ENCODE measurements at regions of chr7 and their contacts with region 1.

Region 1: GRCh38 chr7:50092579-50093491 is at the start of gene ZPBP:
- DNase-seq: peak; percentile 30
- ATAC-seq: peak; percentile 77
- H3K4me3 ChIP-seq: peak within 1 kb of the TSS; percentile 38; the same call in 1 of the 2 replicates
- H3K27ac ChIP-seq: no peak within 1 kb of the TSS
- H3K4me1 ChIP-seq: no peaks in the 10 kb centered on the region
- H3K27me3 ChIP-seq: no peaks in the 10 kb centered on the region
- CTCF ChIP-seq: peak; percentile 54 to 72 (median 68); a peak in 5 of 6 replicates
- EP300 ChIP-seq: no peak
- POLR2A ChIP-seq: peak; percentile 58
- RAD21 ChIP-seq: peak; percentile 95
- polyA plus RNA-seq, gene ZPBP: not detected

Region 2: DNA sequence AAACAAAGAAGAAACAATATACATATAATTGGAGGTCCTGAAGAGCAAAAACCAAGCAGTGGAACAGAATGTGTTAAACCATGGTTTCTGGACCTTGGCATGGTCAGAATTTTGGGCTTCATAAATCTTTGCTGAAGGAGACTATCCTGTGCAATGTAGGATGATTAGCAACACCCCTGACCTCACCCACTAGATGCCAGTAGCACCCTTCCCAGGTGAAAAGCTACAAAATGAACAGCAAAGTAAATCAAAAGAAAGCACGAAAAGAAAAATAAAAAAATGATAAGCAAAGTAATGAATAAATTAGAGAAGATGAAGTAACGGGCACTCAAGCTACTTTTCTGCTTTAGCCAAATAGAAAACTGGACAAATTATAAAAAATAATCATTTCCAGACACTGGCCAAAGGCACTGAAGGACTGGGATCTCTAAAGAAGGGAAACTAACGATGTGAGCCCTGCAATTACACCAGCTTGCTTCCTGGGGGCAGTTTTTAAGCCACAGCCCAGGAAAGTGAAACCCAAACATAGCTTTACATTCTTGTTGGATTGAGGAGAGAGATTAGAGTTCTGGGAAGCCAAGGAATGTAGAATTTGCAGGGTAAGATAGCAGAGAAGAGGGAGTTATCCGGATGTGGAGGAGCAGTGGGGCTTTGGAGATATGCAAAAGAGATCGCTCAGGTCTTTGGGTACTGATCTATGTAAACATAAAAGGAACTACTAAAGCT is 19.6 kb after region 1 on chr7:
- CTCF ChIA-PET with region 1: interaction called, 17 read pairs
- POLR2A ChIA-PET with region 1: no interaction called
- RAD21 ChIA-PET with region 1: interaction called, 9 read pairs
- SMC1A ChIA-PET with region 1: interaction called, 36 read pairs
- in situ Hi-C with region 1: no loop called
- intact Hi-C with region 1: no loop called
- DNase-seq: no peak
- ATAC-seq: no peak; the same call in 2 of the 3 replicates
- H3K4me3 ChIP-seq: no peak overlapping the region
- H3K27ac ChIP-seq: no peak overlapping the region
- H3K4me1 ChIP-seq: no peaks in the 10 kb centered on the region
- H3K27me3 ChIP-seq: no peaks in the 10 kb centered on the region
- CTCF ChIP-seq: 0 out of 6 replicates have a peak, but pooled peaks of 1 of the 3 experiments have one; percentile 4
- EP300 ChIP-seq: no peak
- POLR2A ChIP-seq: no peak
- RAD21 ChIP-seq: 0 out of 2 replicates have a peak, but pooled peaks have one; percentile 6

Region 3: DNA sequence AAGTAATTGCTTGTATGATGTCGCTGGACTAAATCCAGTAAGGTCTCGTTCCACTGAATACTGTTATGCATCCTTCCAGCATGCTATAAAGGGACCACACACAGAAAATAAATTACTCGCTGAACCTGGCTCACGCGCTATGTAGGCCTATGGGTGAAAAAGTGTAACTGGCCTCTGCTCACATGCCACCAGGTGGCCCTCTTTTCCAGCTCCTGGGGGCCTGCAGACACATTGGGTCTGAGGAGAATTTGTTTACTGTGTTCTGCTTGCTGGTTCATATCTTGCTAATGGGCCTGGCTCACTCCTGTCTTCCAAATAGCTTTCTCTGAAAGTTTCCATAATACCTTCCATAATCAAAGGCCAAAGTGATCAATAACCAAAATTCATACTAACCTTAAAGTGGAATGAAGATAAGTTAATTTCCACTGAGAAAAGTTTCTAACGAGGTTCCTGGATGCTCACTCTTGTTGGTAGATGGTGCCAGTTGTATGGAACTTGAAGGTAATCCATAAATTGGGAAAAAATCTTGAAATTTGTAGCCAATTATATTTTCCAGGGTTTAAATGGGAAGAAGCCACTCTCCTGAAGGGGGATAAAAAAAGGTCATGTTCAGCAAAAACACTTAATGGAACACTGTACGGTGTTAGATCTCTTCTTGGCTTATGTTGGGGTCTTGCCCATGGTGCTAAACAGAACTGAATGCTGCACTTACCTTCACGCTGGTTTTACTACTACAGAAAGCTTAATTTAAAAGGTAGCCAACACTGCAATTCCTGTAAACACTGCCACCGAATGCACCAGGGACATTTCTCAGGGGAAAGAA is 27.2 kb after region 1 on chr7:
- CTCF ChIA-PET with region 1: interaction called, 36 read pairs
- POLR2A ChIA-PET with region 1: no interaction called
- RAD21 ChIA-PET with region 1: interaction called, 9 read pairs
- SMC1A ChIA-PET with region 1: interaction called, 36 read pairs
- in situ Hi-C with region 1: no loop called
- intact Hi-C with region 1: no loop called
- DNase-seq: no peak
- ATAC-seq: peak; percentile 98
- H3K4me3 ChIP-seq: no peak overlapping the region
- H3K27ac ChIP-seq: no peak overlapping the region
- H3K4me1 ChIP-seq: peaks cover 4% of the 10 kb centered on the region; the same call in 1 of the 2 replicates
- H3K27me3 ChIP-seq: no peaks in the 10 kb centered on the region
- CTCF ChIP-seq: peak; percentile 68 to 70 (median 69)
- EP300 ChIP-seq: no peak
- POLR2A ChIP-seq: no peak
- RAD21 ChIP-seq: peak; percentile 77

Region 4: GRCh38 chr7:50632561-50633413 is 540.0 kb after region 1 on chr7:
- CTCF ChIA-PET with region 1: interaction called, 6 read pairs
- POLR2A ChIA-PET with region 1: no interaction called
- RAD21 ChIA-PET with region 1: interaction called, 5 read pairs
- SMC1A ChIA-PET with region 1: interaction called, 5 read pairs
- in situ Hi-C with region 1: no loop called
- intact Hi-C with region 1: loop called (anchors 5 kb)
- DNase-seq: no peak
- ATAC-seq: peak; percentile 91
- H3K4me3 ChIP-seq: no peak overlapping the region
- H3K27ac ChIP-seq: no peak overlapping the region
- H3K4me1 ChIP-seq: no peaks in the 10 kb centered on the region
- H3K27me3 ChIP-seq: peaks cover 0 to 1% of the 10 kb centered on the region in 2 experiments; a peak in 3 of 4 replicates
- CTCF ChIP-seq: peak; percentile 73 to 95 (median 88)
- EP300 ChIP-seq: no peak
- POLR2A ChIP-seq: no peak
- RAD21 ChIP-seq: peak; percentile 65

Region 5: GRCh38 chr7:50679218-50680007 is 586.6 kb after region 1 on chr7:
- CTCF ChIA-PET with region 1: interaction called, 6 read pairs
- POLR2A ChIA-PET with region 1: no interaction called
- RAD21 ChIA-PET with region 1: interaction called, 8 read pairs
- SMC1A ChIA-PET with region 1: interaction called, 4 read pairs
- in situ Hi-C with region 1: loop called (anchors 10 kb)
- intact Hi-C with region 1: loop called (anchors 1 kb)
- DNase-seq: no peak
- ATAC-seq: peak; percentile 80
- H3K4me3 ChIP-seq: no peak overlapping the region
- H3K27ac ChIP-seq: no peak overlapping the region
- H3K4me1 ChIP-seq: no peaks in the 10 kb centered on the region
- H3K27me3 ChIP-seq: peaks cover 4 to 10% of the 10 kb centered on the region in 2 experiments; a peak in 3 of 4 replicates
- CTCF ChIP-seq: peak; percentile 29 to 55 (median 40); a peak in 4 of 6 replicates
- EP300 ChIP-seq: no peak
- POLR2A ChIP-seq: no peak
- RAD21 ChIP-seq: peak; percentile 71

Region 6: GRCh38 chr7:51067757-51068156 is 974.9 kb after region 1 on chr7:
- CTCF ChIA-PET with region 1: interaction called, 4 read pairs
- POLR2A ChIA-PET with region 1: no interaction called
- RAD21 ChIA-PET with region 1: interaction called, 4 read pairs
- SMC1A ChIA-PET with region 1: no interaction called
- in situ Hi-C with region 1: no loop called
- intact Hi-C with region 1: loop called (anchors 1 kb)
- DNase-seq: no peak
- ATAC-seq: peak; percentile 65; the same call in 2 of the 3 replicates
- H3K4me3 ChIP-seq: no peak overlapping the region
- H3K27ac ChIP-seq: no peak overlapping the region
- H3K4me1 ChIP-seq: no peaks in the 10 kb centered on the region
- H3K27me3 ChIP-seq: no peaks in the 10 kb centered on the region
- CTCF ChIP-seq: peak; percentile 43 to 55 (median 53); a peak in 5 of 6 replicates
- EP300 ChIP-seq: no peak
- POLR2A ChIP-seq: no peak
- RAD21 ChIP-seq: peak; percentile 46

Region 7: DNA sequence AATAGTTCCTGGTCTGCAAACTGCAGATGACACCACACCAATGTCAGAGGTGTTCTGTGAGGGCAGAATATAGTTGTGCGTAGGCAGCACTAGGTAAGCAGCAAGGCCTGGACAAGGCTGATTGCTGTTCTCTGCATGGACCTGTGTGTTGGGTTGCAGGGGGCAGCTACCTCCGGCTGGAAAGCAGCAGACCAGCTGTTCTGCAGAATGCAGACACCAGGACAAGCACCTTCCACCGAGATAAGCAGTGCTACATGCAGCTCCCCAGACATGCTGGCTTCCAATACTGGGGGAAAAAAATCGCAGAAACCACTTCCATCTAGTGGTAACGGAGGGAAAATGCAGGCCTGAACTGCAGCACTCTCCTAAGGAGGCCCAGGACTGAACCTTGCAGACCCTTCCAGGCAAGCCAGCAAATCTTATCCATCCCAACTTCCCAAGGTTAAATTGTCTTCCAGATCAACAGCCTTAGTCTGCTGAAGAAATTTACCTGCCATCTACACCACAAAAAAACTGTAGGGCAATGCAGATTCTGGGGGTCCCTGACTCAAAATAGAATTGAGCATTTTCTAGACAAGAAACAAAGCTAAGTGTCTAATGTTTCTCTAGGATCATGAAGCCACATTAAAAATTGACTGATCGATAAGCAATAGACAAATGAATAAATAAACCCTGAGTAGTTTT is 1274.2 kb after region 1 on chr7:
- CTCF ChIA-PET with region 1: no interaction called
- POLR2A ChIA-PET with region 1: no interaction called
- RAD21 ChIA-PET with region 1: interaction called, 4 read pairs
- SMC1A ChIA-PET with region 1: no interaction called
- in situ Hi-C with region 1: loop called (anchors 25 kb)
- intact Hi-C with region 1: loop called (anchors 5 kb)
- DNase-seq: no peak
- ATAC-seq: peak; percentile 85
- H3K4me3 ChIP-seq: no peak overlapping the region
- H3K27ac ChIP-seq: no peak overlapping the region
- H3K4me1 ChIP-seq: no peaks in the 10 kb centered on the region
- H3K27me3 ChIP-seq: no peaks in the 10 kb centered on the region
- CTCF ChIP-seq: peak; percentile 52 to 60 (median 56)
- EP300 ChIP-seq: no peak
- POLR2A ChIP-seq: no peak
- RAD21 ChIP-seq: peak; percentile 67

Measured in GM12878 (cell line).